H1 (cell line): ENCODE measurements at regions of chr6 and their contacts with region 1.

Region 1: GRCh38 chr6:75526502-75527127 is 33.0 kb upstream of the FILIP1 start:
- DNase-seq: peak in 1 of 2 experiments; percentile 61
- H3K4me3 ChIP-seq: no peak overlapping the region
- H3K27ac ChIP-seq: no peak overlapping the region
- H3K4me1 ChIP-seq: no peaks in the 10 kb centered on the region
- H3K27me3 ChIP-seq: no peaks in the 10 kb centered on the region
- CTCF ChIP-seq: peak in 2 of 3 experiments; percentile 64 to 77; a peak in 3 of 4 replicates
- EP300 ChIP-seq: no peak
- POLR2A ChIP-seq: no peak
- RAD21 ChIP-seq: peak; percentile 96 to 97

Region 2: GRCh38 chr6:75266716-75267291 is 259.8 kb before region 1 on chr6:
- CTCF ChIA-PET with region 1: interaction called, 19 read pairs
- POLR2A ChIA-PET with region 1: no interaction called
- DNase-seq: no peak
- H3K4me3 ChIP-seq: no peak overlapping the region
- H3K27ac ChIP-seq: no peak overlapping the region
- H3K4me1 ChIP-seq: peaks cover 2 to 9% (median 7%) of the 10 kb centered on the region in 4 experiments; a peak in 5 of 7 replicates
- H3K27me3 ChIP-seq: no peaks in the 10 kb centered on the region
- CTCF ChIP-seq: peak in 1 of 3 experiments; percentile 63; a peak in 2 of 4 replicates
- EP300 ChIP-seq: no peak
- POLR2A ChIP-seq: no peak
- RAD21 ChIP-seq: peak; percentile 60 to 66

Region 3: GRCh38 chr6:75376347-75377024 is 150.1 kb before region 1 on chr6:
- CTCF ChIA-PET with region 1: interaction called, 87 read pairs
- POLR2A ChIA-PET with region 1: no interaction called
- DNase-seq: no peak
- H3K4me3 ChIP-seq: no peak overlapping the region; a peak in 1 of 8 replicates
- H3K27ac ChIP-seq: no peak overlapping the region
- H3K4me1 ChIP-seq: peaks cover 4 to 21% (median 12%) of the 10 kb centered on the region in 4 experiments; a peak in 4 of 7 replicates
- H3K27me3 ChIP-seq: no peaks in the 10 kb centered on the region
- CTCF ChIP-seq: no peak
- EP300 ChIP-seq: no peak
- POLR2A ChIP-seq: no peak
- RAD21 ChIP-seq: no peak